CD4-positive, alpha-beta memory T cell (primary cell): ENCODE measurements at regions of chr15 and their contacts with region 1.

Region 1: DNA sequence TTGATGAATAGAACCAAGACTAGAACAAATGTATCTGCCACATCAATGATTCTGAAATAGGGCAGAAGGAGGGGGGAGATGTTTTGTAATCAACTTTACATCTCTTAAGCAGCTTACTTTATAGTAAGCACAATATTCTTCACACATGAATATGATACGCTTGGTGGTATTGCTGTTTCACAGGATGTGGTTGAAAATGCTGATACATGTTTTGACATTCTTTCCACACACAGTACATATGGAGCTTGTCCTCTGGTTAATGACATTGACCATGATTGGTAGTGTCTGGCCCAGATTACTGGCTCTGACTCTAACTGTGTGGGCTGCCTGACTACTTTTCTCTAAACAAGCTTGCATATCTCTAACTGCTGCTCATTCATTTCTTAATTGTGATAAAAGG is 168.9 kb downstream of the KLHL25 start:
- DNase-seq: peak; percentile 66 to 77 (median 68)
- H3K4me3 ChIP-seq: peak overlapping the region in 1 of 2 donors; percentile 12
- H3K4me3 Mint-ChIP-seq: peak overlapping the region; percentile 13 to 83 (median 78)
- H3K27ac ChIP-seq: peak overlapping the region; percentile 39
- H3K27ac Mint-ChIP-seq: peak overlapping the region; percentile 82 to 97 (median 93)
- H3K4me1 ChIP-seq: peaks cover 65% of the 10 kb centered on the region
- H3K4me1 Mint-ChIP-seq: peaks cover 59 to 79% (median 73%) of the 10 kb centered on the region in 4 donors
- H3K27me3 ChIP-seq: no peaks in the 10 kb centered on the region
- H3K27me3 Mint-ChIP-seq: no peaks in the 10 kb centered on the region

Region 2: GRCh38 chr15:85646538-85647091 is 20.8 kb after region 1 on chr15:
- CTCF ChIA-PET with region 1: interaction called, 8 read pairs
- POLR2A ChIA-PET with region 1: interaction called, 57 read pairs
- intact Hi-C with region 1: no loop called
- DNase-seq: peak; percentile 22 to 72 (median 55)
- H3K4me3 ChIP-seq: no peak overlapping the region
- H3K4me3 Mint-ChIP-seq: peak overlapping the region in 6 of 8 donors; percentile 22 to 53 (median 34)
- H3K27ac ChIP-seq: peak overlapping the region; percentile 15
- H3K27ac Mint-ChIP-seq: peak overlapping the region; percentile 62 to 93 (median 84)
- H3K4me1 ChIP-seq: peaks cover 37% of the 10 kb centered on the region
- H3K4me1 Mint-ChIP-seq: peaks cover 39 to 56% (median 45%) of the 10 kb centered on the region in 4 donors
- H3K27me3 ChIP-seq: no peaks in the 10 kb centered on the region
- H3K27me3 Mint-ChIP-seq: no peaks in the 10 kb centered on the region

Region 3: DNA sequence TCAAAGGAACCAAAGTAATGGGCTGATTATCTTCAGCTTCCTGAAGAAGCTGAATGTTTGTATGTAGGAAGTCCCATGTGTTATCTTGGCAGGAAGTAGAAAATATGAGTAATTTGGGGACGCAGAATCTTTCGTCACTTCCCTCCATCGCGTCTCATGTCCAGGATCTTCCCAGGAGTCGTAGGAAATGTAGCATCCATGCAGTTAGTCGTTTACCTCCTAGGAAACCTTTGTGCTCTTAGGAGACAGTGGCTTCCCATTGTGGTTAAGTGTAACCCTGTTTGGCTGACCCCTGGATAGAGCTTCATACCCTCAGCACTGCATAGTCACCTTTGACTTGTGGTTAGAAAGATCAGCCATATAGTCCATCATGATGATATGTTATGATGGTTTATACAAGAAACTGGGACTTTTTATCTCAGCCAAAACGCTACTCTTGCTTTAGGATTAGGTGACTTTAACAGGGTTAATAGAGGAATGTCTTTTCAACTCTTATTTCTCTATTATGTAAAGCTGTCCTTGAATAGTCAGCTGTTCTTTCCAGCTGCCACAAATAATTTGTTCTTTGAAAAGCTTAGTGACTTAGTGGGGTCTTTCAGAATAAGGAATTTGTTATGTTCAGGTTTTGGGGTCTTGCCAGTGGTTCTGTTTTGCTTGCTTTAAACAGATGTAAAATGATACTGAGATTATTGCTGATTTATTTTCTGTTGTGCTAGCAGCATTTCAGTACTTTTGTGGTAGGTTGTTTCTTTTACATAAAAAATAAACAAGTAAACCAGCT is 76.7 kb after region 1 on chr15:
- CTCF ChIA-PET with region 1: no interaction called
- POLR2A ChIA-PET with region 1: interaction called, 60 read pairs
- intact Hi-C with region 1: no loop called
- DNase-seq: peak; percentile 39 to 76 (median 56)
- H3K4me3 ChIP-seq: peak overlapping the region; percentile 21 to 54
- H3K4me3 Mint-ChIP-seq: peak overlapping the region; percentile 68 to 86 (median 76)
- H3K27ac ChIP-seq: peak overlapping the region; percentile 82
- H3K27ac Mint-ChIP-seq: peak overlapping the region; percentile 94 to 98 (median 97)
- H3K4me1 ChIP-seq: peaks cover 87% of the 10 kb centered on the region
- H3K4me1 Mint-ChIP-seq: peaks cover 60 to 87% (median 71%) of the 10 kb centered on the region in 4 donors
- H3K27me3 ChIP-seq: no peaks in the 10 kb centered on the region
- H3K27me3 Mint-ChIP-seq: no peaks in the 10 kb centered on the region